K562 (cell line): ENCODE measurements at regions of chr22 and their contacts with region 1.

Region 1: DNA sequence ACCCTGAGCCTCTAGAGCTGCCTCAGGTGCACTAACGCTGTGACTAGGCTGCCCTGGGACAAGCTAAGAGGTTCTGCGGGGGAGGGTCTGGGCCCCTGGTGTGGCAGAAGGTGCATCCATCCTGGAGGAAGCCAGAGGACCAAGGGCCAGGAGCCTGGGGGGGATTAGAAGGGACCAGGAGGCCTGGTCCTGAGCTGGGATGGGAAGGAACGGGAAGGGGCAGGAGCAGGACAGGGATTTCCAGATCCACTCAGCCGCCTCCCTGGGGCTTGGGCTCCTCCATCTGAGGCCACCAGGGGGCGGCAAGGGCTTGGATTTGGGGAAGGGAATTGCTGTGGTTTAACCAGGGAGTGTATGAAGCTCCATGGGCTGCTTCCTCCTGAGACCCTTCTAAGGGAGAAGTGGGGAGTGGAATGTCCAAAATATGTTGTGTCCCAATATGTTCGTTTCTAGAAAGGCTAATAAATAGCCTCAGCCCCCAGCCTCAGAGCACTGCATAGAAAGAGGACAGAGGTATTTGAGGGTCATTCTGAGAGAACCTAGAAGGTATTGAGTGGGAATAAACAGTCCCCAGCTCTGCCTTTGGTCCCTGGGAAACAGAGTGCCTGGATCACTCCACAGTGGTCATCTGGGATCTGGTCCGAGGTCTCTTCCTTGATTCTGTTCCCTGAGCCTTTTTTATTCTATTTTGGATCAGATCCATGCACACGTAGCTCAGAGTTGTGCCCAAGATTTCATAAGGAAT is 17.4 kb upstream of the PRAME start:
- DNase-seq: peak; percentile 96 to 98 (median 97)
- ATAC-seq: peak; percentile 96
- H3K4me3 ChIP-seq: no peak overlapping the region
- H3K27ac ChIP-seq: no peak overlapping the region
- H3K4me1 ChIP-seq: peaks cover 0 to 14% of the 10 kb centered on the region in 2 experiments; a peak in 3 of 5 replicates
- H3K27me3 ChIP-seq: peaks cover 48 to 60% of the 10 kb centered on the region in 2 experiments
- CTCF ChIP-seq: peak in 1 of 3 experiments; percentile 99; a peak in 2 of 6 replicates
- EP300 ChIP-seq: peak; percentile 75
- POLR2A ChIP-seq: no peak
- RAD21 ChIP-seq: peak in 1 of 2 experiments; percentile 89; a peak in 2 of 4 replicates

Region 2: DNA sequence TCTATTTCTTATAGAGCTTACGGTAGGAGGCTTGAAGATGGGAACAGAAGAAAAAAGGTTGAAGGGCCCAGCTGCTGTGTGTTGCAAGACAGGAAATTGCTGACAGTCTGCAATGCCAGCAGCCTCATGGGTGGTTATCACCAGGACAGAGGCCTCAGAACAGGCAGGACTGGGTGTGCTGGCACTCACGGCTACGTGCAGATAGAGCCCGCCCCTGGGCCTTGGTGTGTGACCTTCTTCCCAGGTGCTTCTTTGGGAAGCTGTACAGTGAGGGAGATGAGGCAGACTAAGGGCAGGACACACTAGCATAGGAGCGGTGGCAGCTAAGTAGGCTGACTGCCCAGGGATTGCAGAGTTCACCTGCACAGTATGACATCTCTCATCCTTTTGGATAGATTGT is 29.9 kb before region 1 on chr22:
- CTCF ChIA-PET with region 1: no interaction called
- POLR2A ChIA-PET with region 1: interaction called, 14 read pairs
- in situ Hi-C with region 1: no loop called
- intact Hi-C with region 1: no loop called
- DNase-seq: peak; percentile 56 to 72 (median 68)
- ATAC-seq: peak; percentile 44
- H3K4me3 ChIP-seq: no peak overlapping the region
- H3K27ac ChIP-seq: no peak overlapping the region; the same call in 2 of the 3 replicates
- H3K4me1 ChIP-seq: peaks cover 13 to 20% of the 10 kb centered on the region in 2 experiments
- H3K27me3 ChIP-seq: no peaks in the 10 kb centered on the region
- CTCF ChIP-seq: no peak
- EP300 ChIP-seq: no peak
- POLR2A ChIP-seq: no peak
- RAD21 ChIP-seq: no peak

Region 3: GRCh38 chr22:22565981-22566380 is 10.4 kb before region 1 on chr22:
- CTCF ChIA-PET with region 1: interaction called, 3 read pairs
- POLR2A ChIA-PET with region 1: interaction called, 64 read pairs
- in situ Hi-C with region 1: no loop called
- intact Hi-C with region 1: no loop called
- DNase-seq: no peak
- ATAC-seq: no peak
- H3K4me3 ChIP-seq: no peak overlapping the region
- H3K27ac ChIP-seq: no peak overlapping the region
- H3K4me1 ChIP-seq: no peaks in the 10 kb centered on the region; a peak in 1 of 5 replicates
- H3K27me3 ChIP-seq: peaks cover 45 to 49% of the 10 kb centered on the region in 2 experiments
- CTCF ChIP-seq: no peak
- EP300 ChIP-seq: no peak
- POLR2A ChIP-seq: no peak
- RAD21 ChIP-seq: no peak

Region 4: DNA sequence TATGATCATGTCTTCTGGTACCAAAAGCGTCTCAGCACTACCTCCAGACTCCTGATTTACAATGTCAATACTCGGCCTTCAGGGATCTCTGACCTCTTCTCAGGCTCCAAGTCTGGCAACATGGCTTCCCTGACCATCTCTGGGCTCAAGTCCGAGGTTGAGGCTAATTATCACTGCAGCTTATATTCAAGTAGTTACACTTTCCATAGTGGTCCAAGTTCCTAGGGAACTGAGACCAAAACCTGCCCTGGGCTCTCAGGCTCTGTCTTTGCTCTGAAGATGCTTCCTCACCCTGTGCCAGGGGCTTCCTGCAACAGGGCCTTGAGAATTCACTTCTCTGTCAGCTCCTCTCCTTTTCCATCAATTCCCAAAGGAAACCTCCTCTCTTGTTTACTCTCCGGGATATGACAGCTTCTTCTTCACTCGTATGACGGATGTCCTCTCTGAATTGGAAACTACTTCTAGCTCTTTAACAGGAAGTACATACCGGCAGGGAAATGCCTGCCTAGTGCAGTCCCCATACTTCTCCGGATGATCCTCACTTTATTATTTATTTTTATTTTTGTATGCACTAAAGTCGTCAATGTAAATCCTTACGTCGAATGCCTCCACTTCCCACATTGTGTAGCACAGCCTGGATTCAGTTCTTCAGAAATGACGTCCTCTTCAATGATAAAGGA is 12.2 kb after region 1 on chr22:
- CTCF ChIA-PET with region 1: interaction called, 41 read pairs
- POLR2A ChIA-PET with region 1: interaction called, 74 read pairs
- in situ Hi-C with region 1: no loop called
- intact Hi-C with region 1: no loop called
- DNase-seq: no peak
- ATAC-seq: no peak
- H3K4me3 ChIP-seq: no peak overlapping the region
- H3K27ac ChIP-seq: no peak overlapping the region
- H3K4me1 ChIP-seq: no peaks in the 10 kb centered on the region
- H3K27me3 ChIP-seq: peaks cover 17 to 33% of the 10 kb centered on the region in 2 experiments; a peak in 4 of 5 replicates
- CTCF ChIP-seq: no peak
- EP300 ChIP-seq: no peak
- POLR2A ChIP-seq: no peak
- RAD21 ChIP-seq: no peak

Region 5: DNA sequence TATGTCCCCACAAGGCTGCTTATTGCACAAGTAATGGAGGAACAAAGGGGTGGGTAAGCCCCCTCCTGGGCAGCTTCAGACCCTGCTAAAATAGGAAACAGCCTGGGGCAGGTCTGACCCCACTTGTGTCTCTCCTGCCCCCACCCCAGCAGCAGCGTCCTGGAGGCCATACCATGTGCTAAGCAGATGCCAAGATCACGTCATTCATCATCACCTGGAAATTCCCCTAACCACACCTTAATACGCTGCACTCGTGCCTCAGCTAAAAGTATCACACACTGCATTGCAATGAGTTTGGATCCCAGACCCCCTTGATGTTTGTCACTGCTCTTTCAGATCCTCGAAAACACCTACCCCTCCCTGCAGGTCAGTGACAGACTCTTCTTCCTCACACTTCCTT is 40.2 kb after region 1 on chr22:
- CTCF ChIA-PET with region 1: interaction called, 15 read pairs
- POLR2A ChIA-PET with region 1: interaction called, 8 read pairs
- in situ Hi-C with region 1: no loop called
- intact Hi-C with region 1: no loop called
- DNase-seq: peak in 1 of 4 experiments; percentile 40
- ATAC-seq: peak; percentile 1
- H3K4me3 ChIP-seq: no peak overlapping the region
- H3K27ac ChIP-seq: no peak overlapping the region
- H3K4me1 ChIP-seq: no peaks in the 10 kb centered on the region
- H3K27me3 ChIP-seq: peaks cover 52 to 64% of the 10 kb centered on the region in 2 experiments
- CTCF ChIP-seq: no peak
- EP300 ChIP-seq: no peak
- POLR2A ChIP-seq: no peak
- RAD21 ChIP-seq: no peak